ENCODE measurements at regions of chr16 and their contacts with region 1.

Region 1: GRCh38 chr16:88737298-88738150 is 31.2 kb downstream of the CTU2 start:
- DNase-seq: peak; percentile 92
- CTCF ChIP-seq: peak; percentile 97

Region 2: DNA sequence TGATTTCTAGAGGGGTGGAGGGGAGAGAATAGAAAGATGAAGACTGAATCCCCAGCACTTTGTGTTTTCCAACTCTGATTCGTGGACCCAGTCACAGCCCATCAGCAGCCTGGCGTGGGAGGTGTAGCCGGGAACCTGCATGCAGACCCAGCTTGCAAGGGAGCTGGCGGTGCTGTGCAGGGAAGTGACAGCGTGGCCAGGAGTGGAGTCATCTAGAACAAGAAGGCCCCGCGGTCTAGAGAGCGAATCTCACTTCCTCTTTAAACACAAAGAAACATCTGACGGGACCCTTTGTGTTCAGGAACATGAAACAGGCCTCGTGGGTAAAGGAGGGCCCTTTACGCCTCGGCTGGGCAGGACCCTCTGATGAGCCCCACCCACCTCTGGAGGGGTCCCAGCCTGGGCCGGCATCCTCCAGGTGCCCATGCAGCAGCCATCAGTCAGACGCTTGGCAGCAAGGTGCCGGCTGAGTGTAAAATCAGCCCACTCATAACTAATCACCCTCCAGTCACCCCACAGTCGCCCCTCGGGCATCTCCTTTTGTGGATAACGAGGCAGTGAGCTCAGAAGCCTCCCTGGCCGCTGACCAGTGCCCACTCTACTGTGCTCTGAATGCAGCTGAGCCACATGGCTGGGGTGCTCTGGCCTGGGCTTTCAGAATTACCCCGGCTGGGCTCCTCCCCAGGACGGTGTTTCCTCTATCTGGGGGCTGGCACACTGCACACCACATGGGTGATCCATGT is 55.6 kb before region 1 on chr16:
- in situ Hi-C with region 1: no loop called
- DNase-seq: peak; percentile 93
- CTCF ChIP-seq: no peak

Region 3: GRCh38 chr16:88785106-88785924 is 47.8 kb after region 1 on chr16 and contains the start of gene PIEZO1:
- in situ Hi-C with region 1: loop called (anchors 10 kb)
- DNase-seq: peak; percentile 91
- CTCF ChIP-seq: peak; percentile 97

Measured in GM13977 (cell line).